ENCODE measurements at regions of chr2 and their contacts with region 1.

Region 1: GRCh38 chr2:217713395-217714286 is 289.2 kb downstream of the TNS1 start:
- DNase-seq: peak; percentile 73
- H3K27ac ChIP-seq: no peak overlapping the region
- CTCF ChIP-seq: peak; percentile 93

Region 2: GRCh38 chr2:217650716-217651360 is 62.8 kb before region 1 on chr2:
- CTCF ChIA-PET with region 1: interaction called, 25 read pairs
- POLR2A ChIA-PET with region 1: no interaction called
- DNase-seq: peak; percentile 34
- H3K27ac ChIP-seq: no peak overlapping the region
- CTCF ChIP-seq: peak; percentile 54

Measured in RWPE1 (cell line).